CD4-positive, alpha-beta T cell (primary cell): ENCODE measurements at regions of chrX and their contacts with region 1.

Region 1: GRCh38 chrX:150693775-150694574 is 779 bp downstream of the MTMR1 start:
- DNase-seq: peak; percentile 20 to 87 (median 58)
- ATAC-seq: peak; percentile 24
- H3K4me3 ChIP-seq: peak overlapping the region; percentile 60
- H3K4me3 Mint-ChIP-seq: peak overlapping the region; percentile 98
- H3K27ac ChIP-seq: peak overlapping the region; percentile 72 to 82
- H3K27ac Mint-ChIP-seq: peak overlapping the region; percentile 99
- H3K4me1 ChIP-seq: peaks cover 70% of the 10 kb centered on the region
- H3K4me1 Mint-ChIP-seq: peaks cover 61% of the 10 kb centered on the region
- H3K27me3 ChIP-seq: no peaks in the 10 kb centered on the region
- H3K27me3 Mint-ChIP-seq: no peaks in the 10 kb centered on the region
- CTCF ChIP-seq: no peak

Region 2: GRCh38 chrX:149539283-149540130 is 1154.5 kb before region 1 on chrX:
- CTCF ChIA-PET with region 1: no interaction called
- POLR2A ChIA-PET with region 1: interaction called, 13 read pairs
- intact Hi-C with region 1: no loop called
- DNase-seq: peak; percentile 77 to 96 (median 85)
- ATAC-seq: peak; percentile 52
- H3K4me3 ChIP-seq: peak overlapping the region; percentile 65
- H3K4me3 Mint-ChIP-seq: peak overlapping the region; percentile 89
- H3K27ac ChIP-seq: peak overlapping the region; percentile 56 to 58
- H3K27ac Mint-ChIP-seq: peak overlapping the region; percentile 96
- H3K4me1 ChIP-seq: peaks cover 16% of the 10 kb centered on the region
- H3K4me1 Mint-ChIP-seq: peaks cover 8% of the 10 kb centered on the region
- H3K27me3 ChIP-seq: no peaks in the 10 kb centered on the region
- H3K27me3 Mint-ChIP-seq: no peaks in the 10 kb centered on the region
- CTCF ChIP-seq: no peak

Region 3: GRCh38 chrX:149721778-149722177 is 972.2 kb before region 1 on chrX:
- CTCF ChIA-PET with region 1: no interaction called
- POLR2A ChIA-PET with region 1: no interaction called
- intact Hi-C with region 1: no loop called
- DNase-seq: no peak
- ATAC-seq: no peak
- H3K4me3 ChIP-seq: no peak overlapping the region
- H3K4me3 Mint-ChIP-seq: no peak overlapping the region
- H3K27ac ChIP-seq: no peak overlapping the region
- H3K27ac Mint-ChIP-seq: no peak overlapping the region
- H3K4me1 ChIP-seq: no peaks in the 10 kb centered on the region
- H3K4me1 Mint-ChIP-seq: no peaks in the 10 kb centered on the region
- H3K27me3 ChIP-seq: no peaks in the 10 kb centered on the region
- H3K27me3 Mint-ChIP-seq: no peaks in the 10 kb centered on the region
- CTCF ChIP-seq: no peak

Region 4: GRCh38 chrX:150568320-150569154 is 125.4 kb before region 1 on chrX and contains the start of gene MTM1:
- CTCF ChIA-PET with region 1: no interaction called
- POLR2A ChIA-PET with region 1: interaction called, 5 read pairs
- intact Hi-C with region 1: loop called (anchors 5 to 10 kb)
- DNase-seq: peak; percentile 76 to 97 (median 89)
- ATAC-seq: peak; percentile 88
- H3K4me3 ChIP-seq: peak within 1 kb of the TSS; percentile 62
- H3K4me3 Mint-ChIP-seq: peak within 1 kb of the TSS; percentile 98
- H3K27ac ChIP-seq: peak within 1 kb of the TSS; percentile 40 to 72
- H3K27ac Mint-ChIP-seq: peak within 1 kb of the TSS; percentile 95
- H3K4me1 ChIP-seq: peaks cover 26% of the 10 kb centered on the region
- H3K4me1 Mint-ChIP-seq: peaks cover 44% of the 10 kb centered on the region
- H3K27me3 ChIP-seq: no peaks in the 10 kb centered on the region
- H3K27me3 Mint-ChIP-seq: no peaks in the 10 kb centered on the region
- CTCF ChIP-seq: no peak
- total RNA-seq, gene MTM1: 20.6 to 26.9 TPM

Region 5: GRCh38 chrX:150607201-150607600 is 86.8 kb before region 1 on chrX:
- CTCF ChIA-PET with region 1: no interaction called
- POLR2A ChIA-PET with region 1: no interaction called
- intact Hi-C with region 1: no loop called
- DNase-seq: peak in 1 of 14 experiments; percentile 10
- ATAC-seq: no peak
- H3K4me3 ChIP-seq: no peak overlapping the region
- H3K4me3 Mint-ChIP-seq: no peak overlapping the region
- H3K27ac ChIP-seq: no peak overlapping the region
- H3K27ac Mint-ChIP-seq: no peak overlapping the region
- H3K4me1 ChIP-seq: no peaks in the 10 kb centered on the region
- H3K4me1 Mint-ChIP-seq: peaks cover 9% of the 10 kb centered on the region
- H3K27me3 ChIP-seq: no peaks in the 10 kb centered on the region
- H3K27me3 Mint-ChIP-seq: no peaks in the 10 kb centered on the region
- CTCF ChIP-seq: no peak

Region 6: DNA sequence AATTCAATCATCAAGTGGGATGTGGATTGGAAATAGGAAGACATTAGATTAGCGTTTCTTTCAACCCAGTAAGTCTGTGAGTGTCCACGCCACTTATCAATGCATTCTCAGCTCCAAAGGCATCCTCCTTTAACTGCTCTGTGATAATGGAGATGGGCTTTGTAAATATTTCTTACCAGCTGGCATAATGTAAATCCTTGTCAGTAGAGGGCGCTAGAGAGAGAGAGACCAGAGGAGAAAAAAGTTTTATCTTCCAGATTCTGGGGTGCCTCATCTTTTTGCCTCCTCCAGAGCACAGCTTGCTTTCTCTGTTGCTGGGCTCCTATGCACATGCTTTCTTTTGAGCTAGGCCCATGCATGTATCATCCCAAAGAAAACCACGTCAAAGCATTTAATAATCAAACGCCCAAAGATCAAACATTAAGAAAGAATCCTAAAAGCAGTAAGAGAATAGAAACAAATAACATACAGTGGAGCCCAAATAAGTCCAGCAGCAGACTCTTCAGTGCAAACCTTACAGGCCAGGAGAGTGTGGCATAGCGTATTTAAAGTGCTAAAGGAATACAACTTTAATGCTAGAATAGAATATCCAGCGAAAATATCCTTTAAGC is 10.3 kb before region 1 on chrX:
- CTCF ChIA-PET with region 1: interaction called, 11 read pairs
- POLR2A ChIA-PET with region 1: interaction called, 18 read pairs
- intact Hi-C with region 1: no loop called
- DNase-seq: peak in 4 of 14 experiments; percentile 44 to 78 (median 72)
- ATAC-seq: peak; percentile 54
- H3K4me3 ChIP-seq: no peak overlapping the region
- H3K4me3 Mint-ChIP-seq: no peak overlapping the region
- H3K27ac ChIP-seq: no peak overlapping the region
- H3K27ac Mint-ChIP-seq: no peak overlapping the region
- H3K4me1 ChIP-seq: peaks cover 12% of the 10 kb centered on the region
- H3K4me1 Mint-ChIP-seq: peaks cover 12% of the 10 kb centered on the region
- H3K27me3 ChIP-seq: no peaks in the 10 kb centered on the region
- H3K27me3 Mint-ChIP-seq: no peaks in the 10 kb centered on the region
- CTCF ChIP-seq: peak; percentile 61

Region 7: DNA sequence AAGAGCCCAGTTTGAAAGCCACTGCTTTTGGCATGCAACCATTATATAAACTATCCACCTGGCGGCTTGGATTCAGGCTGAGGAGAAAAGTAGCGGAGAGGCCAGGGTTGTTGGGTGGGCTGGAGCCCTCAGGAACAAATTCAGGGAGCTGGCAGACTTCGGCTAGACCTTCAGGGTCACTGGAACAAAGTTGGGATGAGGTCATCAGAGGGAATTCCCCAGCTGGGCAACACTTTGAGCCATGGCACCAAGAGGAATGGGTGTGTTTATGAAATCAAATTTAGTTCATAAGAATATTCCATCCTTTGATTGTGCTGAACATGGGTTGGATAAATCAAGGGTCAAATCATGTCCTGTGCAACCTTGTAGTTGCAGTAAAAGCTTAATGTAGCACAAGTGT is 21.2 kb after region 1 on chrX:
- CTCF ChIA-PET with region 1: interaction called, 7 read pairs
- POLR2A ChIA-PET with region 1: interaction called, 31 read pairs
- intact Hi-C with region 1: loop called in 1 of 2 experiments (anchors 2 kb)
- DNase-seq: peak in 1 of 14 experiments; percentile 5
- ATAC-seq: no peak
- H3K4me3 ChIP-seq: no peak overlapping the region
- H3K4me3 Mint-ChIP-seq: no peak overlapping the region
- H3K27ac ChIP-seq: no peak overlapping the region
- H3K27ac Mint-ChIP-seq: peak overlapping the region; percentile 43
- H3K4me1 ChIP-seq: peaks cover 4% of the 10 kb centered on the region
- H3K4me1 Mint-ChIP-seq: peaks cover 53% of the 10 kb centered on the region
- H3K27me3 ChIP-seq: no peaks in the 10 kb centered on the region
- H3K27me3 Mint-ChIP-seq: no peaks in the 10 kb centered on the region
- CTCF ChIP-seq: no peak